ENCODE measurements at regions of chr18 and their contacts with region 1.

Region 1: GRCh38 chr18:31942999-31943865 is at the start of gene TRAPPC8:
- DNase-seq: peak; percentile 96
- H3K4me3 Mint-ChIP-seq: peak within 1 kb of the TSS; percentile 99
- H3K27ac Mint-ChIP-seq: peak within 1 kb of the TSS; percentile 99
- H3K4me1 Mint-ChIP-seq: peaks cover 35% of the 10 kb centered on the region
- H3K27me3 Mint-ChIP-seq: no peaks in the 10 kb centered on the region
- total RNA-seq, gene TRAPPC8: 32.6 and 35.0 TPM in 2 replicates

Region 2: DNA sequence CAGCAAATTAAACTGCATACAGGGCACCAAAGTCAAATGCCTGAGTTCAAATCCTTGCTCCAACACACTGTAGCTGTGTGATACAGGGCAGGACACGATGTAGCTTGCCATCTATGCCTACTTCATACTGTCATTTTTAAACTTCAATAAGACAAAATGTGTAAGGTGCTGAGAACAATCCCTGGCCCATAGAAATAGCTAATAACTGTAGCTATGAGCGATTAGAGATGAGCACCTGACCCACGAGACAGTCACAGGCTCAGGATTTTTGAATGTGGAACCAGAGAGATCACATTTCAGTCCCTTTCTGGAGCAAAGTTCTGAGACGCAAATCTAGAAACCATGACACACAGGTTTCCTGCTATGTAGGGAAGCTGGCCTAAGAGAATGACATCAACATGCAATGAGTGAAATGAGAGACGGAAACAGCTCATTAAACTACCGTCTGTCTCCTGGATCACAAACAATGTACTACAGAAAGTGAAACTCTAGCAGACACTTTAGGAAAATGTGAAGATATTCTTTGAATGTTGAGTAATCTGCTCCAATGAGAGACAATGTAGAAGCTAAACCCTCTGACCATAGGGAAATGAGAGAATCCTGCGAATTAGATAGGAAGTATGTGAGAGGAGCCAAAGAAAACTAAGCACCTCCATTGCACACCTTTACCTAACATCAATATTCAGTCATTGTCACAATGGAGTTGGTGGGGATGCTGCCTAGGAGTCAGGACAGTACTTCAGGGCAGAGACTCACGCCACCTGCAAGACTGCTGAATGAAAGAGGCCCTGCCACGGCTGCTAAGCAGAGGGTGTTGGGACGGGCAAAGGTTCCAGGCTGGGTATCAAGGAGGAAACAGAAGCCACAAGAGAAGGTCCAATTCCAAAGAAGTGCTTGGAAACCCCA is 284.3 kb before region 1 on chr18:
- intact Hi-C with region 1: loop called (anchors 10 kb)
- DNase-seq: peak; percentile 73
- H3K4me3 Mint-ChIP-seq: peak overlapping the region; percentile 50
- H3K27ac Mint-ChIP-seq: peak overlapping the region; percentile 63
- H3K4me1 Mint-ChIP-seq: peaks cover 13% of the 10 kb centered on the region
- H3K27me3 Mint-ChIP-seq: peaks cover 4% of the 10 kb centered on the region

Region 3: DNA sequence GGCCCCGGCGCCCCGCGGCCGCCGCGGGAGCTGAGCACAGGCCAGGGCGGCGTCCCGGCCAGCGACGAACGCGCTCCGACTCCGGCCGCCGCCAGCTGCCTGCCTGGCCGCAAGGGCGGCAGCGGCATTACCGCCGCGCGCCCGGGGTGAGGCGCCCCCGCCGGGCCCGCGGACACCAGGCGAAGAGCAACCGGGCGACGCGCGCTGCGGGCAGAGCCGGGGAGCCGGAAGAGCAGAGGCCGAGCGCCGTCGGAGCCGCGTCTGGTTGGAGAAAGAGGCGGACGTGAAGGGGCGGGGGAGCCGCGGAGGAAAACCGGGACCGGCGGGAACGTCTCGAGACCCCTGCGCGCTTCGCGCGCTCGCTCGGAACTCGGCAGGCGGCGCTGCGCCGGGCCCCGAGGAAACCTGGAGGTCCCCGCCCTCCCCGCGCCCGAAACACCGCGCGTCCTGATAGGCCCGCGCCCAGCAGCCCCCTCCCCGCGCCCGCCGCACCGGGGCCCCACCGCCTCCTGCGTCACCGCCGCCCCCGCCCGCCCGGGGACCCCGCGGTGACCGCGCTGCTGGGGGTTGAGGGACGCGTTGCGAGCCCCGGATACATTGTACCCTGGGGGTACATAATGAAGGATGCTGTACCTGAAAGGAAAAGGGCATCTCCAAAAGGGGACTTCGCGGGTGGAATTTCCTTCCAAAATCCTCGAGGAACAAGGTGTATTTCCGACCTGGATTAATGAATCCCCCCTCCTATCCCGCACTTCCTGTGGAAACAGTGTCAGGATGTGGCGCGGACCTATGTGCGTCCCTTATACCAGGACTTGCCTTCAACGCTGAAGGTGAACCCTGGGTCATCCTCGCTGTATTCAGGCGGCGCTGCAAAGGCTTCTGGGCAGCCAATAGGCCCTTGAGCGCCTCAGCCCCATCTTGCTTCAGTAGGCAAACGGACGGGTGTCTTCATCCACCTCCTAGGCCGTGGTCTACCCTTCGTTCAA is 257.8 kb before region 1 on chr18:
- intact Hi-C with region 1: loop called (anchors 1 kb)
- DNase-seq: peak; percentile 85
- H3K4me3 Mint-ChIP-seq: peak overlapping the region; percentile 81
- H3K27ac Mint-ChIP-seq: peak overlapping the region; percentile 40
- H3K4me1 Mint-ChIP-seq: peaks cover 12% of the 10 kb centered on the region
- H3K27me3 Mint-ChIP-seq: peaks cover 51% of the 10 kb centered on the region

Region 4: GRCh38 chr18:31701744-31702143 is 241.5 kb before region 1 on chr18:
- intact Hi-C with region 1: no loop called
- DNase-seq: no peak
- H3K4me3 Mint-ChIP-seq: no peak overlapping the region
- H3K27ac Mint-ChIP-seq: no peak overlapping the region
- H3K4me1 Mint-ChIP-seq: peaks cover 3% of the 10 kb centered on the region
- H3K27me3 Mint-ChIP-seq: peaks cover 3% of the 10 kb centered on the region

Region 5: GRCh38 chr18:31892936-31893335 is 50.3 kb before region 1 on chr18:
- intact Hi-C with region 1: no loop called
- DNase-seq: no peak
- H3K4me3 Mint-ChIP-seq: no peak overlapping the region
- H3K27ac Mint-ChIP-seq: no peak overlapping the region
- H3K4me1 Mint-ChIP-seq: no peaks in the 10 kb centered on the region
- H3K27me3 Mint-ChIP-seq: no peaks in the 10 kb centered on the region

Region 6: DNA sequence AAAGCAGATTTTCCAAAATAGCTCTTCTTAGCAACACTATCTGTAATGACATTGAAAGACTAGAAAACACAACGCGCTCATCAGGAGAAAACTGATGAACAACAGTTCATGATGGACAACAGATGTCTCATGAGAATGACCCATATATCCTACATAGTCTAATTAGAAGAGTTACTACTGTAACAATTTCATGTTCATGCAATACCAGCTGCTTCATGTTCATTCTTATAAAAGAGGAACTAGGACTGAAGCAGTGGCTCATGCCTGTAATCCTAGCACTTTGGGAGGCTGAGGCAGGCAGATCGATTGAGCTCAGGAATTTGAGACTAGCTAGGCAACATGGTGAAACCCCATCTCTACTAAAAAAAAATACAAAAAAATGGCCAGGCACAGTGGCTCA is 23.0 kb before region 1 on chr18:
- intact Hi-C with region 1: no loop called
- DNase-seq: no peak
- H3K4me3 Mint-ChIP-seq: no peak overlapping the region
- H3K27ac Mint-ChIP-seq: no peak overlapping the region
- H3K4me1 Mint-ChIP-seq: peaks cover 7% of the 10 kb centered on the region
- H3K27me3 Mint-ChIP-seq: no peaks in the 10 kb centered on the region

Region 7: DNA sequence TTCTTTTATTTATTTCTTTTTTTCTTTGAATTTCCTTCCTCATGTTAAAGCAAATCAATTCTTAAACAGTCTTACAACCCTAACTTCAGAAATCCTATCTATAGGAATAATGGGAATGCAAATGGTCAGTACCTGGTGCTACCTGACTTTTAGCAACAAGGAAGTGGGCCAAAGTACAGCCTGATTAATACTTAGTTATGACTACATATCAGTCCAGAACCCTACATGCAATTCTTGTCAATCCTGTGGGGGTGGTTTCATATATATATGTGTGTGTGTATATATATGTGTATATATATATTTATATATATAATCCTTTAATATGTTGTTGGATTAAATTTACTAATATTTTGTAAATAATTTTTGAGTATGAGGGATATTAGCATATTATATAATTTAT is 14.5 kb after region 1 on chr18:
- intact Hi-C with region 1: loop called (anchors 1 kb)
- DNase-seq: no peak
- H3K4me3 Mint-ChIP-seq: no peak overlapping the region
- H3K27ac Mint-ChIP-seq: no peak overlapping the region
- H3K4me1 Mint-ChIP-seq: no peaks in the 10 kb centered on the region
- H3K27me3 Mint-ChIP-seq: no peaks in the 10 kb centered on the region

Region 8: DNA sequence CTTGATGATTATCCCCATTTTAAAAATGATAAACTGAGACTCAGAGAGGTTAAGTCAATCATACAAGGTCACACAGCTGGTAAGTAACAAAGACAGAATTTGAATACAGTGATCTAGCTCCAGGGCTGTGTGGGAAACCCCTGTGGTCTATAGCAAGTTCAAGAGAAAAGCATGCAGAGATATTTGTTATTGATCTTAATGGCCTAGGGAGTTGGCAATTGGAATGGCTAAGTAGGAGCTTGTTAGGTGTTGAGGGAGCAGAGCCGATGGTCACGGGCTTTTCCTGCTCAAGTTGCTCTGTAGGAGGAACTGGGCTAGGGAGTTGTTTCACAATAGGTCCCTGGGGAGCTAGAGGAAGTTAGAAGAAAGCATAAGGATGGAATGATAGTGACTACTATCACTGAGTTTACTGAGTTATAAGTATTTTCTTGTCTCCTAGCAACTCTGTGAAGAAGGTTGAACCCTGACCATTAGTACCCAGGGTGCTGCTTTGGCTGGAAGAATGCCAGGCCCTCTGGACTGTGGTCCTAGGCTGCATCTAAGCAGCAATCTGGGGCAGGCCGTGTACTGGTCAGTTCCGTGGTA is 105.4 kb after region 1 on chr18:
- intact Hi-C with region 1: loop called (anchors 2 kb)
- DNase-seq: peak; percentile 73
- H3K4me3 Mint-ChIP-seq: peak overlapping the region; percentile 73
- H3K27ac Mint-ChIP-seq: peak overlapping the region; percentile 95
- H3K4me1 Mint-ChIP-seq: peaks cover 38% of the 10 kb centered on the region
- H3K27me3 Mint-ChIP-seq: no peaks in the 10 kb centered on the region

Region 9: DNA sequence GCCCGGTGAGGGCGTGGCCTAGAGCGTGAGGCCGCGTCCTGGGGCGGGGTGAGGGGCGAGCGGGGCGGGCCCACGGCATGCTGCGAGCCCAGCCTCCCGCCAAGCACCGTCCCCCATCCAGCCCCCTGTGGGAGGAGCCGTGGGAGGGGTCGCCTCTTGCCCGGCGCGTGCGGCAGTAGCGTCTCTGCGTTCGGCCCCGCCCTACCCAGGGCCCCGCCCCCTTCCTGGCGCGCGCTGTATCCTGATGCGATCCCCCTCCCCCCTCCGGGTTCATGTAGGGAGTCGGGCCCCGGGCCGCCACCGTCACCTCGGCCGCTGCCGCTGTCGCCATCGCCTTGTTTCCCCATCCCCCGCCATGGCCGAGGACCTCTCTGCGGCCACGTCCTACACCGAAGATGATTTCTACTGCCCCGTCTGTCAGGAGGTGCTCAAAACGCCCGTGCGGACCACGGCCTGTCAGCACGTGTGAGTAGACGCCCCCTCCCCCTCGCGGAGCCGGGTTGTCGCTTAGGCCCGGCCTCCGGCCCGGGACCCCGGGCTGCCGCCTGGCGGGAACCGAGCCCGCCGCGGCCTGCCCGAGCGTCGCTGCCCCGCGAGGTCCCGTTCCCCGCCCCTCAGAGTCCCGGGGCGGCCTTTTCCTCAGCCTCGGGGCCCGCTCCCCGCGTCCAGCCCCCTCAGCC is 149.3 kb after region 1 on chr18:
- intact Hi-C with region 1: loop called (anchors 1 kb)
- DNase-seq: peak; percentile 100
- H3K4me3 Mint-ChIP-seq: peak overlapping the region; percentile 91
- H3K27ac Mint-ChIP-seq: peak overlapping the region; percentile 97
- H3K4me1 Mint-ChIP-seq: peaks cover 43% of the 10 kb centered on the region
- H3K27me3 Mint-ChIP-seq: no peaks in the 10 kb centered on the region

Region 10: GRCh38 chr18:32271672-32272208 is 328.5 kb after region 1 on chr18:
- intact Hi-C with region 1: no loop called
- DNase-seq: peak; percentile 60
- H3K4me3 Mint-ChIP-seq: no peak overlapping the region
- H3K27ac Mint-ChIP-seq: no peak overlapping the region
- H3K4me1 Mint-ChIP-seq: no peaks in the 10 kb centered on the region
- H3K27me3 Mint-ChIP-seq: peaks cover 5% of the 10 kb centered on the region

Measured in activated CD4-positive, alpha-beta T cell treated with anti-CD3 and anti-CD28 coated beads, Interleukin-2, amount 10 ng/mL, durations not matched to agents 24 days and 14 days (primary cell).